ENCODE measurements at regions of chr3 and their contacts with region 1.

Region 1: DNA sequence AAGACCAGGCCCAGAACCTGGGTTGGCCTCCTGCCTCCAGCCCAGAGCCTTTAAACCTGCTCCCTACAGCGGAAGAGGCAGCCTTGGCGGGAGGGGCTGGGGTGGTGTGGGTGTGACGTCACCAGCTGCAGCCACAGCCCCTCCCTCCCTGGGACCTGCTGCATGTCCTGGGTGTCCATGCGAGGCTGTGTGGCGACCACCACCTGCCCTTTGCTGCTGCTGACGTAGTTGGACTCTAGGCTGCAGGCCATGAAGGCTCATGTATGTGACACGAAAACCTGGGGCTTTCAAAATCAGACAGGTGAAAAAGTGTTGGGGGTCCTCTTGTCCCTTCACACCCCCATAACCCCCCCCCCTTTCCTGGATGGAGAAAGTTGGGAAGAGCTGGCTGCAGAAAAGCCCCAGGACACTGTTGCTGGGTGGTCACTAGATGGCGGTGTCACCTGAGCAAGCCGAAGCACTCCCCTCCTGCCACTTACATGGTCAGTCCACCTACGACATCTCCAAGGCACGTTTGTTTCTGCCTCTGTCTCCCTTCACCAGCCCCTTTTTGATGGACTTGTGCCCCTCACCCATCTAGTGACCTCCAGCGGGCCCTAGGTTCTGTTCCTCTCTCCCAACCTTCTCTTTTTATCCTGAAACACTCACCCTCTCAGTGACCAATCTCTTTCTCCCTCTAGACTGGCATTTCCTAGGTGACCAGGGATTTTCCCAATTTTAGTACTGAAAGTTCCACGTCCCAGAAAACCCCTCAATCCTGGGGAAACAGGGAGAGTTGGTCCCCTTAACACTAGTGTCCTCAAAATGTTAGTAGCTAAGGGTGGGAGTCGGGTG is 35.2 kb downstream of the SLC6A20 start:
- DNase-seq: peak; percentile 68
- ATAC-seq: peak; percentile 69
- H3K4me3 Mint-ChIP-seq: no peak overlapping the region
- H3K27ac Mint-ChIP-seq: no peak overlapping the region
- H3K4me1 Mint-ChIP-seq: no peaks in the 10 kb centered on the region
- H3K27me3 Mint-ChIP-seq: peaks cover 3% of the 10 kb centered on the region

Region 2: GRCh38 chr3:45832691-45833090 is 71.6 kb after region 1 on chr3:
- CTCF ChIA-PET with region 1: interaction called, 5 read pairs
- POLR2A ChIA-PET with region 1: no interaction called
- intact Hi-C with region 1: loop called in 1 of 2 experiments (anchors 2 kb)
- DNase-seq: no peak
- ATAC-seq: no peak
- H3K4me3 Mint-ChIP-seq: no peak overlapping the region
- H3K27ac Mint-ChIP-seq: no peak overlapping the region
- H3K4me1 Mint-ChIP-seq: peaks cover 3% of the 10 kb centered on the region
- H3K27me3 Mint-ChIP-seq: no peaks in the 10 kb centered on the region

Region 3: GRCh38 chr3:45929042-45929679 is 168.1 kb after region 1 on chr3:
- CTCF ChIA-PET with region 1: interaction called, 50 read pairs
- POLR2A ChIA-PET with region 1: no interaction called
- intact Hi-C with region 1: loop called (anchors 1 kb)
- DNase-seq: peak; percentile 82
- ATAC-seq: peak; percentile 95
- H3K4me3 Mint-ChIP-seq: no peak overlapping the region
- H3K27ac Mint-ChIP-seq: no peak overlapping the region
- H3K4me1 Mint-ChIP-seq: no peaks in the 10 kb centered on the region
- H3K27me3 Mint-ChIP-seq: no peaks in the 10 kb centered on the region

Region 4: DNA sequence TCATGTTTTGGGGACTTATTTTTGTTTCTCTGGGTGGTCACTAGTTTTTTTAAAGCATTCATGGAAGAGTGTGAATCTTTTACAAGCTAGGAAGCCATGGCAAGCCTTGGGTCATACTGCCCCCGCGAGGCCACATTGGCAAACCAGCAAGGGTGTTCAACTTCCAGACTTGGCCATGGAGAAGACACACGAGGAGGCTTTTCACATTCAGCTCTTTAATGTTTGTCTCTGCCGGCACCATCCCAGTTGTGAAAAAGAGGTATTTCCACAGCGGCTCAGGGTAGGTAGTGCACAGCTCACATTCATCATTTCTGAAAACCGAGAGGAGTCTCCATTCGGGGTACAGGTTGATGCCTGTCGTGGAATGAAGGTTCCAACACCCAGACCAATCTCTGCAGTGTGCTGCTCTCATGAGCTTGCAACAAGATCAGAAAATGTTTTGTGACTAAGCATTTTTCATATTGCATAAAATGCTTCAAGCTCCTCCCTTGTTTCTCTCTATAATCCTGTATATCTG is 617.4 kb after region 1 on chr3:
- CTCF ChIA-PET with region 1: interaction called, 4 read pairs
- POLR2A ChIA-PET with region 1: no interaction called
- intact Hi-C with region 1: loop called (anchors 5 kb)
- DNase-seq: peak; percentile 84
- ATAC-seq: peak; percentile 53
- H3K4me3 Mint-ChIP-seq: no peak overlapping the region
- H3K27ac Mint-ChIP-seq: no peak overlapping the region
- H3K4me1 Mint-ChIP-seq: peaks cover 28% of the 10 kb centered on the region
- H3K27me3 Mint-ChIP-seq: peaks cover 22% of the 10 kb centered on the region